AG04450 (cell line): ENCODE measurements at regions of chr15 and their contacts with region 1.

Region 1: DNA sequence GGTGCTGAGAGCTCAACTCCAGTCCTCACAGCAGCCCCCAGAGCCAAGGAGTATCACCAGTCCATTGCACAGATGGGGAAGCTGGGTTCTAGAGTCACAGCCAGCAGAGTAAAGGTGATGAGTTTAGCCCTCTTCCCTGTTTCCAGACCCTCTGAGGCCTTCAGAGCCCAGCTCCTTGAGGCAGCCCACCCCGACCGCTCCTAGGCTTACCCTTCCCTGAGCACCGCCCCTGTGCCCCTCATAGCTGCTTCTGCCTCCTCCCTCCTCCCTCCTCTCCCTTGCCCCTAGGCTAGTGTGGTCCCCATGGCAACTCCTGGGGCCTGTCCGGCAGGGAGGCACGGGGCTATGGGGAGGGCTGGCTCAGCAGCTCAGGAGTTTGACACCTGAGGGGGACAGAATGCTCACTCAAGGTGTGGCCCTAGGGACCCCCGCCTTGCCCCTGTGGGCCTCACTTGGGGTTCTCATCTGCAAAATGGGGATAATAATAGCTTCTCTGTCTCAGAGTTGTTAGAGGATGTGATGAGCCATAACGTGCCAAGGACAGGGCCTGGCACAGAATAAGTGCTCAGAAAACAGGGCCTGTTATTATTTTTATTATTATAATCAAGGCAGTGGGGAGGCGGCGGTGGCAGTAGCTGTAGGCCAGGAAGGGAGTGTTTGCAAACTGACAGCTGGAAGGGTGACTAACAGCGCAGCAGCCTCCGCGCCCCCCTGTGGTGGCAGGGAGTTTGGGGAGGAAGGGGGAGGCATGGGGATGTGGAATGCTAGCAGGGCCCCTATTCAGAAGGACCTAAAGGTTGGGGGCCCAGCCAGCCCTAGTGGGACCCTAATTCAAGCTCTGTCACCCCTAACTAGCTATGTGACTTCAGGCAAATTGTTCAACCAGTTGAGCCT is 11.5 kb downstream of the CSK start:
- DNase-seq: no peak
- H3K4me3 ChIP-seq: no peak overlapping the region
- H3K27ac ChIP-seq: no peak overlapping the region
- H3K27me3 ChIP-seq: no peaks in the 10 kb centered on the region
- CTCF ChIP-seq: peak; percentile 21; the same call in 1 of the 2 replicates

Region 2: DNA sequence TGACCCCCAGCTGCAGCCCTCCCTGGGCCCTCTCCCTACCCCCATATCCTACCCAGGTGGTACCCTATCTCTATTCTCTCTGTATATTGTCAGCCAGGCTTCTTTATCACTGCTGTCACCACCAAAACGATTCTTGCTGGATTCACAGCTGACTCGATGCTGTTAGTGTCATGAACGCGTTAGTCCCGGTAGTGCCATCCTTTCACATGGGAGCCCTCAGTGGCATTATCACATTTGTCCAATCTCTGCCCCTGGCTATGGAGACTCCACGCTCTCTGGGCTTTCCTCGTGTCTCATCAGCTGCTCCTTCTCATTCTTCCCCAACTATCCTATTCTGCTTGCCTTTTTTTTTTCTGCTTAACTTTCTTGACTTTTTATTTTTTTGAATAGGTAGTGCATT is 209.0 kb after region 1 on chr15:
- CTCF ChIA-PET with region 1: no interaction called
- POLR2A ChIA-PET with region 1: interaction called, 10 read pairs
- DNase-seq: no peak
- H3K4me3 ChIP-seq: no peak overlapping the region
- H3K27ac ChIP-seq: no peak overlapping the region
- H3K27me3 ChIP-seq: peaks cover 5% of the 10 kb centered on the region
- CTCF ChIP-seq: no peak